CD14-positive monocyte (primary cell): ENCODE measurements at regions of chr18 and their contacts with region 1.

Region 1: GRCh38 chr18:77101410-77102258 is 30.9 kb downstream of the MBP start:
- DNase-seq: peak; percentile 97 to 98 (median 97)
- H3K4me3 ChIP-seq: peak overlapping the region in 1 of 3 experiments; percentile 42
- H3K4me3 Mint-ChIP-seq: peak overlapping the region; percentile 77 to 82
- H3K27ac ChIP-seq: peak overlapping the region; percentile 93 to 99
- H3K27ac Mint-ChIP-seq: peak overlapping the region; percentile 98 to 100 (median 100)
- H3K4me1 ChIP-seq: peaks cover 81 to 94% of the 10 kb centered on the region in 2 donors
- H3K4me1 Mint-ChIP-seq: peaks cover 93% of the 10 kb centered on the region
- H3K27me3 ChIP-seq: no peaks in the 10 kb centered on the region
- H3K27me3 Mint-ChIP-seq: peaks cover 0 to 4% (median 0%) of the 10 kb centered on the region in 3 donors
- CTCF ChIP-seq: no peak

Region 2: DNA sequence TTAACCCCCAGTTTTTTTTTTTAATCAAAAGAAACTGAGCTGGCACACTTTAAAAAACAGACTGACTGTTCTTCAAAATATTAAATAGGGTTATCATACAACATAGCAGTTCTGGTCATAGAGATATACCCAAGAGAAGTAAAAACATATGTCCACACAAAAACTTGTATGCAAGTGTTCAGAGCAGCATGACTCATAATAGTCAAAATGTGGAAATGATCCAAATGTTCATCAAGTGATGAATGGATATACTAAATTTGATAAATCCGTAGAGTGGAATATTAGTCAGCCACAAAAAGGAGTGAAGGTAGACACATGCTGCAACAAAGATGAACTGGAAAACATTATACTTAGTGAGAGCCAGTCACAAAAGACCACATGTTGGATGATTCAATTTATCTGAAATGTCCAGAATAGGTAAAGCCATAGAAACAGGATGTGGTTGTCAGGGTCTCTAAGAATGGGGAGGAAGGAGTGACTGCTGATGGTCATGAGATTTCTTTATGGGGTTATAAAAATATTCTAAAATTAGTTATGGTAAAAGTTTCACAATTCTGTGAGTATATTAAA is 1679.2 kb before region 1 on chr18:
- intact Hi-C with region 1: no loop called
- DNase-seq: no peak
- H3K4me3 ChIP-seq: no peak overlapping the region
- H3K4me3 Mint-ChIP-seq: no peak overlapping the region
- H3K27ac ChIP-seq: no peak overlapping the region
- H3K27ac Mint-ChIP-seq: no peak overlapping the region
- H3K4me1 ChIP-seq: no peaks in the 10 kb centered on the region
- H3K4me1 Mint-ChIP-seq: no peaks in the 10 kb centered on the region
- H3K27me3 ChIP-seq: peaks cover 0 to 2% of the 10 kb centered on the region in 2 donors
- H3K27me3 Mint-ChIP-seq: peaks cover 3 to 9% (median 5%) of the 10 kb centered on the region in 3 donors
- CTCF ChIP-seq: no peak

Region 3: GRCh38 chr18:77000527-77000926 is 101.1 kb before region 1 on chr18:
- intact Hi-C with region 1: loop called in 1 of 2 experiments (anchors 10 kb)
- DNase-seq: peak; percentile 54 to 73 (median 67)
- H3K4me3 ChIP-seq: no peak overlapping the region
- H3K4me3 Mint-ChIP-seq: peak overlapping the region in 1 of 2 donors; percentile 35
- H3K27ac ChIP-seq: no peak overlapping the region
- H3K27ac Mint-ChIP-seq: peak overlapping the region in 4 of 7 donors; percentile 24 to 68 (median 44)
- H3K4me1 ChIP-seq: peaks cover 26 to 31% of the 10 kb centered on the region in 2 donors
- H3K4me1 Mint-ChIP-seq: peaks cover 27% of the 10 kb centered on the region
- H3K27me3 ChIP-seq: no peaks in the 10 kb centered on the region
- H3K27me3 Mint-ChIP-seq: no peaks in the 10 kb centered on the region
- CTCF ChIP-seq: peak; percentile 97

Region 4: GRCh38 chr18:77067291-77068061 is 34.2 kb before region 1 on chr18:
- intact Hi-C with region 1: loop called in 1 of 2 experiments (anchors 5 kb)
- DNase-seq: peak; percentile 89 to 93 (median 92)
- H3K4me3 ChIP-seq: no peak overlapping the region
- H3K4me3 Mint-ChIP-seq: peak overlapping the region; percentile 59 to 62
- H3K27ac ChIP-seq: peak overlapping the region; percentile 98 to 100
- H3K27ac Mint-ChIP-seq: peak overlapping the region; percentile 100
- H3K4me1 ChIP-seq: peaks cover 72% of the 10 kb centered on the region in 2 donors
- H3K4me1 Mint-ChIP-seq: peaks cover 89% of the 10 kb centered on the region
- H3K27me3 ChIP-seq: no peaks in the 10 kb centered on the region
- H3K27me3 Mint-ChIP-seq: no peaks in the 10 kb centered on the region
- CTCF ChIP-seq: no peak

Region 5: DNA sequence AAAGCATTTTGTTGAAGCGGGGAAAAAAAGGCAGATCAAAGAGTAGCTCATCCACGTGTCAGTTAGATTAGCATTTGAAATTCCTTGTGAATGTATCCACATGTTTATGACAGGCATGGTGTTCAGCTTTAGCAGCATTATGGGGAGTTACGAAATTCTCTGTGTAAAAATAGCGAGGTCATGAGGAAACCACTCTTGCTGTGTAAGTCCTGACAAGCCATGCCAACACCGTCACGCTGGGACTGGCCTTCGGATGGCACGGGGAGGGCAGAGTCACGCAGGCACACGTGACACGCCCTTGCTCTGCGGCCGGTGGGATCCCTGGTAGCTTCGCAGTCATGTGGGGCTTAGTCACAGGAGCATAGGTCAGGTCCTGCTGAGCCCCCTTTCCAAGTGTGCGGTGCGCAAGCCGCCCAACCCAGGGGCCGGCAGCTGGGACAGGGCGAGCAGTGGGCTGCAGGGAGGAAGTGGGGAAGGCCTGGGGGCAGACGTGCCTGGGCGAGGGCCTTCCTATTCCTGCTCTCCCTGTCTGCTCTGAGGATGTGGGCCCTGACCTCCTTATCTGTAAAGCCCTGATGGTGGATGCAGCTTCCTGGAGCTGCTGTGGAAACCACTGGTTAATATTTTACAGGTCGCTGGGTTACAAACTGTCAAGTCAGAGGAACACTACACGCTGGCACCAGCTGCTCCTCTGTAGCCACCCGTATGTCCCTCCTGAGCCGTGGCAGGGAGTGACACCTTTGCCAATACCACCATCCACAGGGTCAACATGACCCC is 13.0 kb after region 1 on chr18:
- intact Hi-C with region 1: loop called (anchors 1 to 2 kb)
- DNase-seq: peak; percentile 100
- H3K4me3 ChIP-seq: peak overlapping the region in 1 of 3 experiments; percentile 29
- H3K4me3 Mint-ChIP-seq: peak overlapping the region; percentile 72 to 76
- H3K27ac ChIP-seq: peak overlapping the region; percentile 97 to 99
- H3K27ac Mint-ChIP-seq: peak overlapping the region; percentile 96 to 99 (median 98)
- H3K4me1 ChIP-seq: peaks cover 76 to 78% of the 10 kb centered on the region in 2 donors
- H3K4me1 Mint-ChIP-seq: peaks cover 82% of the 10 kb centered on the region
- H3K27me3 ChIP-seq: no peaks in the 10 kb centered on the region
- H3K27me3 Mint-ChIP-seq: no peaks in the 10 kb centered on the region
- CTCF ChIP-seq: no peak

Region 6: DNA sequence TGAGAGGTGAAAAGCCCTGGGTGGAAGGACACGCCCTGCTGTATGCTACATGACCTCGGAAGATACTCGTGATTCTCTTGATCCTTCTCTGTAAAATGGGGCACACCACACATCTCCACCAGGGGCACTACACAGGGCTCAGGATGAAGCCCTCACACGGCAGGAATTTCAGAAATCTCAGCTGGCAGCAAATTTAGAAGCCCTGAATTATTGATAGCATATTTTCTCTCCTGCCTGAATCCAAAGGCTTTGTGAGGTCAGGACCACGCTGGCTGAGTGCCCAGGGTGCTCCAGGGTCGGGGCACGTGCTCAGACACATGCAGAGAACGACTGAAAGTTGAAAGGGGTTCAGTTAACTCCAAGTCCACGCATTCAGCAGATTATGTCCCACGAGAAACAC is 105.9 kb after region 1 on chr18:
- intact Hi-C with region 1: no loop called
- DNase-seq: peak; percentile 53 to 69 (median 62)
- H3K4me3 ChIP-seq: no peak overlapping the region
- H3K4me3 Mint-ChIP-seq: no peak overlapping the region
- H3K27ac ChIP-seq: no peak overlapping the region
- H3K27ac Mint-ChIP-seq: peak overlapping the region; percentile 28 to 94 (median 64)
- H3K4me1 ChIP-seq: peaks cover 22 to 38% of the 10 kb centered on the region in 2 donors
- H3K4me1 Mint-ChIP-seq: peaks cover 44% of the 10 kb centered on the region
- H3K27me3 ChIP-seq: no peaks in the 10 kb centered on the region
- H3K27me3 Mint-ChIP-seq: peaks cover 0 to 2% (median 0%) of the 10 kb centered on the region in 3 donors
- CTCF ChIP-seq: peak; percentile 70

Region 7: GRCh38 chr18:77248873-77249568 is 147.4 kb after region 1 on chr18:
- intact Hi-C with region 1: no loop called
- DNase-seq: peak in 1 of 3 donors; percentile 40
- H3K4me3 ChIP-seq: no peak overlapping the region
- H3K4me3 Mint-ChIP-seq: peak overlapping the region; percentile 65 to 86
- H3K27ac ChIP-seq: no peak overlapping the region
- H3K27ac Mint-ChIP-seq: peak overlapping the region in 3 of 7 donors; percentile 3 to 42 (median 6)
- H3K4me1 ChIP-seq: no peaks in the 10 kb centered on the region
- H3K4me1 Mint-ChIP-seq: peaks cover 9% of the 10 kb centered on the region
- H3K27me3 ChIP-seq: peaks cover 39 to 84% of the 10 kb centered on the region in 2 donors
- H3K27me3 Mint-ChIP-seq: peaks cover 62 to 81% (median 64%) of the 10 kb centered on the region in 3 donors
- CTCF ChIP-seq: no peak